Adrenal gland (tissue), 19 donors: ENCODE measurements at regions of chr10 and their contacts with region 1.

Region 1: DNA sequence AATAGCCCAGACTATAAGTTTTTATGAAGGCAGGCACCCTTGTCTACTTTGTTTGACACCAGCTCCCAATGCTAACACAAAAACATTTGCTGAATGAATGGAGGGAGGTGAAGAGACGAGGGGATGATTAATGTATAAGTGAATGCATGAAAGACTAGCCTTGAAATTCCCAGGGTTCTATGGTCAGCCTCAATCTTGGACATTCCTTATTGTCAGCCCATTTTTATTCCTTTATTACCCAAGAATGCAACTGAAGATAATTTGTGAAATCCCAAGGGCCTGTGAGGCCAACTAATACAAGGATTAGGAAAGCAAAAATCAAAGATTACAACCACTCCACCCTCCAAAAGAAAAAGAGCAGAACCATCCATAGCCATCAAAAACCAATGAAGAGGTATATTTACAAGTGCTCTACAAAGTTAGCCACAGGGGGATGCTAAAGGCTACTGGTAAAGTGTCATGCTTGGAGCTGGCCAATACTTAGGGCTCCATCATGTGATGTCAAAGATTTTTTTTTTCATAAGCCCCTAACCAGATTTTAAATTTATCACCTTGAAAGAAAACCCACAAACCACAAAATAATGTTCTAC is 40.0 kb upstream of the ASAH2 start:
- DNase-seq: no peak
- H3K4me3 ChIP-seq: no peak overlapping the region
- H3K27ac ChIP-seq: no peak overlapping the region
- H3K4me1 ChIP-seq: peaks cover 0 to 6% of the 10 kb centered on the region in 2 donors
- H3K27me3 ChIP-seq: no peaks in the 10 kb centered on the region
- CTCF ChIP-seq: peak in 5 of 6 experiments; percentile 26 to 64 (median 53)
- POLR2A ChIP-seq: no peak

Region 2: DNA sequence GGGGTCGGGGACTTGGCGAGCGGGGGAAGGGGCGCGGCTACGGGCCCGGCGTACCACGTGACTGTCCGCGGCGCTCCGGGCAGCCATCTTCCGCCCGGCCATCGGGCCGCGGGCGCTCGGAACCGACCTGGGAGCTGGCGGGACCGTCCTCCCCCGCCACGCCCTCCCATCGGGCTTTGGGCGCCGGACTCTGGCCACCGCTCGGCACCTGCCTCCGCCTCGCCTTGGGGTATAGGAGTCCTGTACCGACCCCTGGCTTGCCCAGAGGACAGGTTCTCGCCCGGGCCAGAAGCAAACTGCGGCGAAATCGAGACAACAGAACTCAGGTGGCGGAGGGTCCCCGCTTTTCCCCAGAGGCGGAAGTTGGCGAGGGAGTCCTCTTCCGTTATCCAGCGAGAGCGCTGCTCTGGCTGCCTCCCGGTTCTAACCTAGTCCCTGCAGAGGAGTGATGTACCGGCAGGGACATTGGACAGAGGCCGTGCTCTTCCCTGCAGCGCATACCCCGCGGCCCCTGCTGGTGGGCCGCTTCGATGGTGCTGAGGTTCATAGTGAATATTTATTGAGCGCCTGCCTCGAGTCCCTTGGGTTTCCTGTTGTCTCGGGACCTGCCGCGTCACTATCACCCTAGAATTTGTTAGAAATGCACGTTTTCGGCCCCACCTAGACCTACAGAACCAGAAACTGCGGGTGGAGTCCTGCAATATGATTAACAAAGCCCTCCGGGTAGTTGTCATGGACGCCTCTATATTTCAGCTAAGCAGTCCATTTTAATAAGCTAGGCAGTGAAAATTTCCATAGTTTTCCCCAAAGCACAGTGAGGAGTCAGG is 333.7 kb after region 1 on chr10:
- intact Hi-C with region 1: loop called in 1 of 2 experiments (anchors 10 kb)
- DNase-seq: peak in 6 of 7 donors; percentile 70 to 83 (median 75)
- H3K4me3 ChIP-seq: peak overlapping the region; percentile 31 to 93 (median 74)
- H3K27ac ChIP-seq: peak overlapping the region; percentile 92 to 99 (median 96)
- H3K4me1 ChIP-seq: peaks cover 7 to 25% of the 10 kb centered on the region in 2 donors
- H3K27me3 ChIP-seq: no peaks in the 10 kb centered on the region
- CTCF ChIP-seq: peak; percentile 32 to 78 (median 58)
- POLR2A ChIP-seq: peak in 1 of 2 donors; percentile 72

Region 3: DNA sequence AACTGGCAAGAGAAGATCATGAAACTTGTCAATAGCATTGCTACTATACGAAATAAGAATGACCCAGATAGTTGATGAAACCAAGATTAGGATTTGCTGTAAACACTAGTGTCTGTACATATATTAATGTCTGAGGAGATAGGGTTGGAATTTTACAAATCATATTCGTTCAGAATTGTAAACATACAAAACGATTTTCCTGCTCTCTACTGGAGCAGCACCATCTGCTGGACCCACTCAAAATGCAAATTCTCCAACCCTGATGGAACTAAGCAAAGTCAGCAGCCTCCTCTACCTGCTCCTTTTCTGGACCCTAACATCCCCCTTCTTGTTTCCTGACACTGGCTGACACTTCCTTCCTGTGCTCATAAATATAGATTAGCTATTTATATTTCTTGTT is 361.8 kb after region 1 on chr10:
- intact Hi-C with region 1: loop called in 1 of 2 experiments (anchors 10 kb)
- DNase-seq: peak in 4 of 7 donors; percentile 37 to 58 (median 43)
- H3K4me3 ChIP-seq: peak overlapping the region in 1 of 4 donors; percentile 11
- H3K27ac ChIP-seq: no peak overlapping the region
- H3K4me1 ChIP-seq: peaks cover 0 to 5% of the 10 kb centered on the region in 2 donors
- H3K27me3 ChIP-seq: no peaks in the 10 kb centered on the region
- CTCF ChIP-seq: peak; percentile 47 to 62 (median 60)
- POLR2A ChIP-seq: no peak